HEK293 (cell line): ENCODE measurements at regions of chr1 and their contacts with region 1.

Region 1: DNA sequence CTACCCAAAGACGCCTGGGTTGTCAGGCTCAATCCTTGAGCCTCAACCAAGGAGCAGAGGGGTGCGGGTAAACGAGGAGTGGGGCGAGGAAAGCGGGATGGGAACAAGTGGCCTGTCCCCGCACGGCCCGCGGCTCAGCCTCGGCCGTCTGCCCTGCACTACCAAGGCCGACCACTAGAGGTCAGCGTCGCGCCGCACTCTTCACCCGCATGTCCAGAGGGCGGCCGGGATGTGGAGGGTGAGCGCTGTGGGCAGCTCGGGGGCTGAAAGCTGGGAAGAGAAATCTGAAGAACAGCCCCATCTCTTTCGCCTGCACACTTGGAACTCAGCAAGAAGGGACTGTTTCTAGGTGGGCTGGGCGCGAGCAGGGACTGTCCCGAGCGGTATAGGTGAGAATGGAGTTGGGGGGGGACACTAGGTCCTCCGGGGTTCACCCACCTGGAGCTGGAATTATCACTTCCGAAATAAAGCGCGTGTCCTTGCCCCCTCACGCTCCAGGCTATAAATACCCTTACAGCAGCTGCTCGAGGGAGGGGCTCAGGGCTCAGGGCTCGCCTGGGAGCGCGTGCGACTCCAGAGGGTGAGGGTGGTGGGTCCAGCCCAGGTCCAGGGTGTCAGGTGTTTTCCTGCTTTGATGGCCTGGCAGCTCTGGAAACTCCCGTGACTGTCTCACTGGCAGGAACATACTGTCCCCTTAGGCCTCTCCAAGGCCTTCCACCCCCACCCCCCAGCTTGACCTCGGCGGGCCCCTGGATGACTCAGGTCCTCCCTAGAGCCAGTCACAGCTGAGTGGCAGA is 9.8 kb downstream of the SLC30A2 start:
- H3K4me3 ChIP-seq: peak overlapping the region; percentile 83
- H3K27ac ChIP-seq: peak overlapping the region; percentile 56; the same call in 1 of the 2 replicates
- H3K4me1 ChIP-seq: no peaks in the 10 kb centered on the region
- CTCF ChIP-seq: peak; percentile 98

Region 2: DNA sequence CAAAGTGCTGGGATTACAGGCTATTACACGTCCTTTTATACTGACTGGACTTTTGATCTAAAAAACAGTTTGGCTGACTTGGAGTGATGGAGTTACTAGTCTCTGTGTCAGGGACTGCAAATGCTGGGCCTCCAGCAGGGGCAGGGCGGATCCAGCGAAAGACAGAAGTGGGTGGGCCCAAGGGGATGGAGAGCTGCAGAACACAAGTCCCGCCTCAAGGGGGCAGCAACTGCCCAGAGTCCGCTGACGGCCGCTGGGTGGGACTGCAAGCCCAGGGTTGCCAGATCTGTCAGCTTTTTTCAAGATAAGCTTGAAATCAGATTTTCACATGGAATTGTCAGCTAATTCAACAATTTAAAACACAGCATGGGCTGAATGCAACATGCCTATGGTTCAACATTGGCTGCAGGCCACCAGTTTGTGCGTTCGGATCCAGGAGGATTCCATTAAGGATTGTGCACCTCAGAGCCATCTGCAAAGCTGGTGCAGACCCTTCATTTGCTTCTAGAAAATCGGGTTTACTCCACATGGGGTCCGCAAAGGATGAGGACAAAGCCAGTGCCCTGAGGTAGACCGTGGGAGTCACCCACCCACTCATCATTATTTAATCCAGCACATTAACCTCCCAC is 140.7 kb before region 1 on chr1:
- CTCF ChIA-PET with region 1: interaction called, 14 read pairs
- POLR2A ChIA-PET with region 1: no interaction called
- H3K4me3 ChIP-seq: no peak overlapping the region
- H3K27ac ChIP-seq: no peak overlapping the region
- H3K4me1 ChIP-seq: no peaks in the 10 kb centered on the region
- CTCF ChIP-seq: peak; percentile 97

Region 3: DNA sequence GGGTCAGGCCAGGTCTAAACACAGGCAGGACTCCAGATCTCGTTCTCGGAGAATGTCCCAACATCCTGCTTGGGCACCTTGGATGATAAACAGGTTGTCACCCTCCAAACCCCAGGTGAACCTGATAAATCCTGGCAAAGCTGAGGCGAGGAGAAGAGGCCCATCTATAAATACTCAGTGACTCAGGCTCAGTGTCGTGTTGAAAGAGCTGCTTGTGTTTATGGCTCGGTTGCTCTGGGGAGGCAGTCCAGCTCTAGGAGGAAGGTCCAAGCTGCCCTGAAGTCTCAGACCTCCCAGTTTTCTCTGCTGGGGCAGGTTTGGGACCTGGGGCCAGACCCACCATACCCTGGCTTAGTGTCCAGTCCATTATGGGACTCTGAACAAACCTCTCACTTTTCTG is 47.1 kb after region 1 on chr1:
- CTCF ChIA-PET with region 1: interaction called, 16 read pairs
- POLR2A ChIA-PET with region 1: no interaction called
- H3K4me3 ChIP-seq: no peak overlapping the region
- H3K27ac ChIP-seq: no peak overlapping the region
- H3K4me1 ChIP-seq: no peaks in the 10 kb centered on the region
- CTCF ChIP-seq: no peak

Region 4: DNA sequence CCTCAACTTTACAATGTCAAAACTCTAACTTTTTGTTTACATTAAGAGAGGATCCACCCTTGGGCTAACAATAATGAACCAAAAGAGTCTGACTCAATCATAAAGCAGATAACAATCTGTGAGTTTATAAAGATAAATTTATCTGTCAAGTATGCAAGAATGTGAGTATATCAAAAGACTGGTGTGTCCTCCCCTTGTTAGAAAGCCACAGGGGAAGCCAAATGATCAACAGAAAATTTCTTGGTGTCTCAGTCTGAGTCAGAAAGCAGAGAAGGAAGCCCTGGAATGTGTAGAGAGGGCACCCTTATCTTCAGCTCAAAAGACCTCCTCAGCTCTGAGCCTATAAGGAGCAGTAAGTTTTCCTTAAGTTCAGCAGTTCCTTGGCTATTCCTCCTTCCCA is 61.5 kb after region 1 on chr1:
- CTCF ChIA-PET with region 1: interaction called, 43 read pairs
- POLR2A ChIA-PET with region 1: no interaction called
- H3K4me3 ChIP-seq: no peak overlapping the region
- H3K27ac ChIP-seq: no peak overlapping the region
- H3K4me1 ChIP-seq: no peaks in the 10 kb centered on the region
- CTCF ChIP-seq: no peak

Region 5: GRCh38 chr1:26169669-26170471 is 133.7 kb after region 1 on chr1 and contains the start of gene ZNF593:
- CTCF ChIA-PET with region 1: interaction called, 16 read pairs
- POLR2A ChIA-PET with region 1: no interaction called
- H3K4me3 ChIP-seq: peak within 1 kb of the TSS; percentile 68
- H3K27ac ChIP-seq: peak within 1 kb of the TSS; percentile 59; the same call in 1 of the 2 replicates
- H3K4me1 ChIP-seq: peaks cover 7% of the 10 kb centered on the region; the same call in 1 of the 2 replicates
- CTCF ChIP-seq: peak; percentile 98